Gastrocnemius medialis (tissue), 4 donors: ENCODE measurements at regions of chr15 and their contacts with region 1.

Region 1: DNA sequence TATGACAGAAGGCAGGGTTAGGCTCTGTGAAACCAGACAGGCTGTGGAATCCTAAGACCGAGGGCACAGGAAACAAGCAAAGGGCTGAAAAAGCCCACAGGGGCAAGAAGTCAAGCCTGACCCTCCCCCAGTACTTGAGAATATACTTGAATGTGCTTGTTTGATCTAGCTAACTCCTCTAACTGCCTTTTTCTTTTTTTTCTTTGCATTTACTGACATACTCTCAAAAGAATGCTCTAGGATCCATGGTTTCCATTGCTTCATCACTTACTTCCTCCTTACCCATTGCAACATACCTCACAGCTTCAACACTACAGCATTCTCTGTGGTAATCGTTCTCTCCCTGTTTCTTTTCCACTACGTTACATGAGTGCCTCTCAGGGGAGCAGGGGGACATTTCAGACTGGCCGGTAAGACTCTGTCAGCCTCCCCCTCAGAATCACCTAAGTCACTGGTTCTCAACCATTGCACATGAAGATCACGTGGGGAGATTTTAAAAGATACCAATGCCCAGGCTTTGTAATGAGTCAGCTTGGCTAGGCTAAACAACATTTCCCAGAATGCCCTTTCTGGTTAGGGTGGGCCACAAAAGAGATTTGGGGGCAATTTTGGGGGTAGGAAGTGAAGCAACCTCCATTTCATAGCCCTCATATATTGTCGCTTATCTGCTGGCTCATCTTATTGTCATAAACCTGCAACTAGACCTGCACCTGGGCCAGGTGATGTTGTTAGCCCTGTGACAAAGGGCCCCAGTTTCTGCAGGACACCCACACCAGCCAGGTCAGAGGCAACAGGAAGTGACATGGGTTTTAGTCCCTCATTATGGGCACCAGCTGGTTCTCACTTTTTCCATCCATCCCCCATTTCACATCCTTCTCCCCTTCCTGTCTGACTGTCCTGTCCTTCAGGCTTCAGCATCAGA is 24.6 kb upstream of the RSL24D1 start:
- DNase-seq: no peak
- ATAC-seq: no peak
- H3K4me3 ChIP-seq: no peak overlapping the region
- H3K27ac ChIP-seq: no peak overlapping the region
- H3K4me1 ChIP-seq: no peaks in the 10 kb centered on the region
- H3K27me3 ChIP-seq: no peaks in the 10 kb centered on the region
- CTCF ChIP-seq: no peak
- POLR2A ChIP-seq: no peak

Region 2: DNA sequence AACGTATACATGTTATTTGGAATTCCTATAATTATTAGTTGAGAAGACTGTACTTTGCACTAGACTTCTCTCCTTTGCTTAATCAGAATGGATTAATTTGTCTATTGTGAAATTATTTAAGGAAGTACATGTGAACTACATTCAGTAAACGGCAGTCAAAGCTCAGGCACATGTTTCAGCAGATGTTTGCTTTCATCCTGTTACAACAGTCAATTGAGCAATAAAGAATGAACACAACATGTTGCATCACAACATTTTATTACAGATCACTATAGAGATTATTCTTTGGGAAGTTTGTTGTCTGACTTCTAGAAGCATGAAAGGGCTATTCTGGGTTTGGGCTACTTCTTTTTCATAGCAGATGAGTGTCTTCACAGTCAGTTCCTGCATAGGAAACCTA is 29.0 kb after region 1 on chr15:
- in situ Hi-C with region 1: no loop called
- intact Hi-C with region 1: no loop called
- DNase-seq: no peak
- ATAC-seq: peak; percentile 73 to 85
- H3K4me3 ChIP-seq: no peak overlapping the region
- H3K27ac ChIP-seq: no peak overlapping the region
- H3K4me1 ChIP-seq: no peaks in the 10 kb centered on the region
- H3K27me3 ChIP-seq: no peaks in the 10 kb centered on the region
- CTCF ChIP-seq: no peak
- POLR2A ChIP-seq: peak in 1 of 2 donors; percentile 8

Region 3: GRCh38 chr15:55290528-55291057 is 69.2 kb after region 1 on chr15:
- in situ Hi-C with region 1: loop called (anchors 5 kb)
- intact Hi-C with region 1: loop called (anchors 1 kb)
- DNase-seq: peak; percentile 57 to 64
- ATAC-seq: peak; percentile 89 to 91
- H3K4me3 ChIP-seq: peak overlapping the region; percentile 62 to 72 (median 62)
- H3K27ac ChIP-seq: peak overlapping the region; percentile 6 to 79 (median 71)
- H3K4me1 ChIP-seq: no peaks in the 10 kb centered on the region
- H3K27me3 ChIP-seq: no peaks in the 10 kb centered on the region
- CTCF ChIP-seq: peak; percentile 59 to 93 (median 77)
- POLR2A ChIP-seq: no peak

Region 4: DNA sequence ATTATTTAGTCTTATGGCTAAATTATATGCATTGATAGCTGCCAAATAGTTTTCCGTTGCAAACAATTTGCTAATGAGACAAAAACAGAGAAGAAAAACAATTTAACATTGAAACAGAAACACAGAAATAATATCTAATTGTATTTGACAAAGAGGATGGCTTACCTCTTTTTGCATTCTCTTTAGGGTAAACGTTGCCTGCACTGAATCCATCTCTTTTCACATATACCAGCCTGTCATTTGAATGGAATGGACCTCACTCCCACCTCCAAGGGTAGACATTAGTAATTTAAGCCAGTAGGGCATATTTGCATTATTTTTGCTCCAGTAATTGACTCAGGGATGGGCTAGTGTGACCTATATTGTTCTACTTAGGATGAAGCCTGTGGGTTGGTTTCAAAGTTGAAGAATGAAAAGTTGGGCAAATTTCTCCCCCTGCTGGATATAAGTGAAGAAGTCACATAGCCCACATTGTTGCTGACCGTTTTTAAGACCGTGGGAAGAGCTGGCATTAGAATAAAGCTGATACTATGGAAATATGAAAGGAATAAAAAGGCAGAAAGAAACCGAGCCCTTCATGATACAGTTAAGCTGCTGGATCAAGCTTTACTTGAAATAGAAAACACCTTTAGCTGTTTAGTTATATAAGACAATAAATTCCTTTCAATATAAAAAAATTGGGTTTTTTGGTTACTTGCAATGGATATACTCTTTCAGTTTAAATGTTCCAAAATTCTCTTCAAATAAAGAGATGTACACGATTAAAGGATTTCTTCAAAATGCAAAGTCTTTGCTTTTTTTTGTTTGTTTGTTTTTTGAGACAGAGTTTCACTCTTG is 213.9 kb after region 1 on chr15:
- in situ Hi-C with region 1: loop called (anchors 5 to 25 kb)
- intact Hi-C with region 1: loop called (anchors 5 kb)
- DNase-seq: no peak
- ATAC-seq: peak; percentile 58 to 81
- H3K4me3 ChIP-seq: no peak overlapping the region
- H3K27ac ChIP-seq: no peak overlapping the region
- H3K4me1 ChIP-seq: no peaks in the 10 kb centered on the region
- H3K27me3 ChIP-seq: no peaks in the 10 kb centered on the region
- CTCF ChIP-seq: peak in 4 of 5 experiments; percentile 29 to 56 (median 33)
- POLR2A ChIP-seq: no peak